ENCODE measurements at regions of chr17 and their contacts with region 1.

Region 1: GRCh38 chr17:21043286-21044232 is 748 bp upstream of the USP22 start:
- DNase-seq: peak; percentile 90
- H3K4me3 ChIP-seq: peak overlapping the region; percentile 65
- CTCF ChIP-seq: peak; percentile 89

Region 2: DNA sequence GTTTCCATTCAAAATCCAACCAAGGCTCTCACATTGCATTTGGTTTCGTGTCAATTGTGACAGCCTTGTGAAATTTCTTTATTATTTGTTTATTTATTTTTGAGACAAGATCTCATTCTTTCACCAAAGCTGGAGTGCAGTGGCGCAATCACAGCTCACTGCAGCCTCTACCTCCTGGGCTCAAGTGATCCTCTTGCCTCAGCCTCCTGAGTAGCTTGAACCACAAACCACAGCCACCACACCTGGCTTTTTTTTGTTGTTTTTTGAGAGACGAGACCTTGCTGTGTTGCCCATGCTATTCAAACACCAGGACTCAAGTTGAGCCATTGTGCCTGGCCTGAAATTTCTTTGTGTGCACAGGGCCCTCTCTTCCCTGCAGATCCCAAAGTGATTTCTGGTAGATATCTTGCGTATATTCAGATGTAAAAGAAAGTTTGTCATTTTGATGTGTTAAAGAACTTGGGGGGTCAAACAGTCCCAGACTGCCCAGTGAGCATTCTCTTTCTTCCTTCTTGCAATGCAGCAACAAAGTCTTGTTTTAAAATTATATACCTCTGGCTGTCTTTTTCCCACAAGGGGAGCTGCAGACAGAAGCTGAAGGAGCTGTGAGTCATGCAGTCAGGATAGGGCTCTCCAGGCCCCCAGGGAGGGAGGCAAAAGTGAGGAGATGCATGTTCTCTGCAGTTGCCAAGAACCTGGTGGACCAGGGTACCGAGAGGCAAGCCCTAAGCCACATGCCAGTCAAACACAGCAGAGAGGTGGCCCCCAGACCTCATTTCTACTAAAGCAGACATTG is 14.7 kb after region 1 on chr17:
- CTCF ChIA-PET with region 1: interaction called, 24 read pairs
- POLR2A ChIA-PET with region 1: interaction called, 4 read pairs
- DNase-seq: no peak
- H3K4me3 ChIP-seq: no peak overlapping the region
- CTCF ChIP-seq: peak; percentile 28

Region 3: DNA sequence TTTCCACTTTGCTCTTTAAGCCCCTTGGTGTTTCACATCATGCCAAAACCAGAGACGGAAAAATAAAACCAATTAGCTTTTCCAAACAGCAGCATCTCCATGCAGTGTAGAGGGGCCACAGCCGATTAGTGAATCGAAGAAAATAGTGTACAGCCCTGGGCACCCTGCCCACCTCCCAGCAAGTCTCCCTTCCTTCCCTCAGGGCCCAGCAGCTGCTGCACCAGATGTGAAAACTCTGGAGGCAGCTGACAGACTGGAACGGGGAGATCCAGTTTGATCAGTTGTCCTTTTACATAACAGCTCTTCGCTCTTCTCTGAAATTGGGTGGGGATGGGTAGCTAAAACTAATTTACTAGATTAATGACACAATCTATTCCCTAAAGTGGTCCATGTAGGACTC is 151.1 kb after region 1 on chr17:
- CTCF ChIA-PET with region 1: no interaction called
- POLR2A ChIA-PET with region 1: no interaction called
- DNase-seq: no peak
- H3K4me3 ChIP-seq: no peak overlapping the region
- CTCF ChIP-seq: no peak